ENCODE measurements at regions of chr1 and their contacts with region 1.

Region 1: DNA sequence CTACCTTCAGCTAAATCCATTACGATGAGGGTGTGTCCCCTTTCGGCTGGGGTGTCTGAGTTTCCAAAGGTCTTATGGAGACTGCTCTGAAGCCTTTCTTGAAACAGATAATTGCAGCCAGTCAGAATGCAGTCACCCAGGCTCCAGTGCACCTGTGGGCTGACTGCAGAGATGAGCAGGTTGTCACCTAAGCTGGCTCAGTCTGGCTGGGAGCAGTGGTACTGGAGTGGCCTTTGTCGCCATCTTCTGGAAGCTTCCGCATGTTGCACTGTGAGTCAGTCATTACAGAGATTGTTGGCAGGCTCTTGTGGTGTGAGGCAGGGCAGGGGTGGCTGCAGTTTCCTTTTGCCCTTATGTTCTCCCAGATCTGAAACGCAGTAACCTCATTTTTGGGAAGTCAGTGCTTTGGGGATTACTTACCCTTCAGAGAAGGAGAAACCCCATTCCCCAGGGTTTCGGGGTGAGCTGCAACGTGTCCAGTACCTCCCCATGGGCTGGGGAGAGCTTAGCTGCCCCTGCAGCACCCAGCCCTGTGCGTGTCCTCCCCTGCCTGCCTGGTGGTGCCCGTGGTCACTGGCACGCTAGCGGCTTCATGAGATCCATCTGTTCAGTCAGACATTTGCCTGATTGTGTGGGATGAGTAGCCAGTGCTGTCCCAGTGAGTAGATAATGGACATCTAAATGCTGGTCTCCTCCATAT is 48.0 kb downstream of the SMYD2 start:
- ATAC-seq: peak; percentile 89 to 100 (median 98)
- H3K4me3 ChIP-seq: no peak overlapping the region
- H3K27ac ChIP-seq: no peak overlapping the region
- H3K4me1 ChIP-seq: peaks cover 2 to 3% of the 10 kb centered on the region in 2 donors

Region 2: GRCh38 chr1:212857992-212858460 is 1470.9 kb before region 1 on chr1 and contains the start of gene FLVCR1:
- in situ Hi-C with region 1: no loop called
- ATAC-seq: peak; percentile 93 to 97 (median 94)
- H3K4me3 ChIP-seq: peak within 1 kb of the TSS; percentile 55 to 86 (median 70)
- H3K27ac ChIP-seq: peak within 1 kb of the TSS; percentile 79 to 88
- H3K4me1 ChIP-seq: peaks cover 27% of the 10 kb centered on the region in 2 donors
- total RNA-seq, gene FLVCR1: 3.1 to 35.7 (median 15.6) TPM

Region 3: GRCh38 chr1:214029796-214030195 is 299.1 kb before region 1 on chr1:
- in situ Hi-C with region 1: no loop called
- ATAC-seq: peak in 5 of 8 experiments; percentile 55 to 76 (median 68)
- H3K4me3 ChIP-seq: no peak overlapping the region
- H3K27ac ChIP-seq: peak overlapping the region; percentile 43 to 58
- H3K4me1 ChIP-seq: peaks cover 48 to 54% of the 10 kb centered on the region in 2 donors

Region 4: DNA sequence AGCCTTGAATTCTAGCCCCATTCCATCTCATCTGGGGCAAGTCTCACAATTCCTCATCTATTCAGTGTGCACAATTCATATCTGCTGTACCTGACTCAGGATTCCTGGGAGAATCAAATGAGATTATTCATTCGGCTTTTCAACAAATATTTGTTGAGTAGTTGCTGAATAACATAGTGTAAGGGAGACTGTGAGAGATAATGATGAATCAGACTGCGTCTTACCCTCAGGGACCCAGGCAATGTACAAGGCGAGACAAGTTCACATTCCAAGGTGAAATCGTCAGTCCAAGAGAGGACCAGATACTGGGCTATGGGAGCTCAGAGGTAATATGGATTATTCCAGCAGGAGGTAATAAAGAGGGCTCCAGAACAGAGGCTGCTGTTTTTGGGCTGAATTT is 115.8 kb before region 1 on chr1:
- in situ Hi-C with region 1: loop called in 4 of 9 experiments (anchors 10 to 25 kb)
- ATAC-seq: peak in 1 of 8 experiments; percentile 48
- H3K4me3 ChIP-seq: no peak overlapping the region
- H3K27ac ChIP-seq: no peak overlapping the region
- H3K4me1 ChIP-seq: peaks cover 17 to 26% of the 10 kb centered on the region in 2 donors

Region 5: GRCh38 chr1:214224611-214225354 is 104.1 kb before region 1 on chr1:
- in situ Hi-C with region 1: loop called in 4 of 9 experiments (anchors 10 to 25 kb)
- ATAC-seq: peak; percentile 64 to 91 (median 86)
- H3K4me3 ChIP-seq: peak overlapping the region in 3 of 5 donors; percentile 2 to 5 (median 3)
- H3K27ac ChIP-seq: peak overlapping the region in 1 of 2 donors; percentile 13
- H3K4me1 ChIP-seq: peaks cover 10 to 12% of the 10 kb centered on the region in 2 donors

Region 6: DNA sequence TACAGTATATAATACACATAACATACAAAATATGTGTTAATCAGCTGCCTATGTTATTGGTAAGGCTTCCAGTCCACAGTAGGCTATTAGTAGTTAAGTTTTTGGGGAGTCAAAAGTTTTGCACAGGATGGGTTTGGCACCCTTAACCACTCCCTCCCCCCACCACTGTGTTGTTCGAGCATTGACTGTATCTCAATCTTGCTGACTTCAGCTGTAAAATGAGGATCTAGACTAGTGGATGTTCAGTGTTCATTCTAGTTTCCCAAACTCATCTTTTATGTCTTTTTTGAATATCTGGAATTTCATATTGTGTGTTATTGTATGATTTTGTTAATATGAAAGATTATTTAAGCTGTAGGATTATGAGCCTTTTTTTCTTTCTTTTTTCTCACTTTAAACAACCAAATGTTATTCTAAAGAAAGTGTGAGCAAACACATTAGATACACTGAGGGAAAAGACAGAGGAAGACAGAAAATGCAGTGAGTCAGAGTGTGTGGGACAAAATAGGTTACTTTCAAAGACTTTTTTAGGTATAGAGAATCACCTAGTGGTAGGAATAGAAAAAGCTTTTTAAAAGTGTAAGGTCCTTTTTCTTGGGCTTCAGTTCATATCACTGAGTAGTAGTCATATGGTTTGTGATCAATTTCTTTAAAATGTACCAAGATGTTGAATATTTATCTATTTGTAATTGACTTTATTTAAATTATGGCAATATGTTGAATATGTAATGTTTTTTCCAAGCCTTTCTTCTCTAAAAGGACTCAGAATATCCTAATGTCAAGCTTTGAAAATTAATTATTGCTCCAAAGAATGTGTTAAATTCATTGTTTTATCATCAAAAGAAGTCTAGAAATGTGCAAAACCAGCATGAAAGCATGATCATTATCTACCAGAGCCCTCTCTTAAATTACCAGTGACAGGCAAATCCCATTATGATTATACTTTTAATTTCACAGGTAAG is 256.2 kb after region 1 on chr1:
- in situ Hi-C with region 1: loop called in 5 of 9 experiments (anchors 10 to 25 kb)
- ATAC-seq: peak in 4 of 8 experiments; percentile 60 to 91 (median 86)
- H3K4me3 ChIP-seq: no peak overlapping the region
- H3K27ac ChIP-seq: no peak overlapping the region
- H3K4me1 ChIP-seq: no peaks in the 10 kb centered on the region

Region 7: DNA sequence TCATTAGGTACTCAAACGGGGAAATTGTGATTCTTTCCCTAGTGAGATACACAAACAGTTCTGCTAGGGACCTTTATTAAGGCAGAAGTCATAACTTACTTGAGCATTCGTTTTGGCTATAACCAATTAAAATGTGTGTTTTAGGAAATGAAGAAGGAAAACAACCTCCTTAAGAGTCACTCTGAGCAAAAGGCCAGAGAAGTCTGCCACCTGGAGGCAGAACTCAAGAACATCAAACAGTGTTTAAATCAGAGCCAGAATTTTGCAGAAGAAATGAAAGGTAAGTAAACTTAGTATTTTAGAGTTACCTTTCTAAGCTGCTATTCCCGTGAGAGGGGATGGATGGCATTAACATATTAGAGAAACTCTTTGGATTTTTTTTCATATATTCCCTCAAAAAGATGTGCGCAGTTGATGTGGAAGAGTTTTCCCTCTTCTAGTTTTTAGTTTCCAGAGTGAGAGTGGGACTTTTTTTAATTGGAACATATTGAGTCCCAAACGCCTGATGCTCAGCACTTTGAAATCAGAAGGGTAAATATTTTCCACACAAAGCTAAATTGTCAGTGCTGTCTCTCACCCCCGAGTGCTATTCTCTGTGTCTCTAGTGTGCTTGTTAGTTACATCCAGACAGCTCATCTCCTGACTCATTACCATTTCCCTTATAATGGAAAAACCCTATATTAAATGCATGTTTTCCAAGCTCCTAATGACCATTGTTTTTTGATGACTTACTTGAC is 309.0 kb after region 1 on chr1:
- in situ Hi-C with region 1: loop called in 1 of 9 experiments (anchors 25 kb)
- ATAC-seq: peak in 3 of 8 experiments; percentile 55 to 65 (median 63)
- H3K4me3 ChIP-seq: no peak overlapping the region
- H3K27ac ChIP-seq: no peak overlapping the region
- H3K4me1 ChIP-seq: peaks cover 0 to 13% of the 10 kb centered on the region in 2 donors

Region 8: GRCh38 chr1:215526553-215527151 is 1197.7 kb after region 1 on chr1:
- in situ Hi-C with region 1: loop called in 3 of 9 experiments (anchors 25 kb)
- ATAC-seq: peak in 4 of 8 experiments; percentile 34 to 57 (median 51)
- H3K4me3 ChIP-seq: no peak overlapping the region
- H3K27ac ChIP-seq: no peak overlapping the region
- H3K4me1 ChIP-seq: peaks cover 14 to 27% of the 10 kb centered on the region in 2 donors

Measured in motor neuron (in vitro differentiated cells).